ENCODE measurements at regions of chr5 and their contacts with region 1.

Region 1: GRCh38 chr5:24005384-24005783 is 498.0 kb downstream of the PRDM9 start:
- DNase-seq: no peak

Region 2: DNA sequence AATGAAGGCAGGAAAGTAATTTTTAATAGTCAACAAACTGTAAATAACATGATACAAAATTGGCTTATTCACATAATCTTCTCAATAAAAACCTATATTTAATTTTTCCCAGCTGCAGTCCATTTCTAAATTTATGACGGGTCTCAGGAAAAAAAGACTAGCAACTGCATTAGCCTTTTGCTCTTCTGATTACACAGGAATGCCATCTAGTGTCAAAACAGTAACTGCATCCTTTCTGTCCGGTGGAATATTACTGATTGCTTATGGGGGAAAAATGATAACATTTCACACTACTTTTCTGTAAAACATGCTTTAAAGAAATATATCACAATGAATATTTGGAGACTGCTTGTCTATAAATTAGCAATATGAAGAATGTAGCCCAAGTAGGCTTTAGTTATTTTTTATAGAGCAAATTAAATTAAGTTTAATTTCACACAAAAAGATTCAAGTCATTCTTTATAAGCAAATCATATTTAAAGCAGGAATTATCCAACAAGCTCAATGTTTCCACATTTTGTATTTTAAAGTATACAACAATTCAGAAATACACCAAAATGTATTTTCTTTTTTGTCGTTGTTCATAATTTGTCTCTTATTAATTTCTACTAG is 104.7 kb after region 1 on chr5:
- intact Hi-C with region 1: loop called (anchors 5 kb)
- DNase-seq: no peak